ENCODE measurements at regions of chr17 and their contacts with region 1.

Region 1: DNA sequence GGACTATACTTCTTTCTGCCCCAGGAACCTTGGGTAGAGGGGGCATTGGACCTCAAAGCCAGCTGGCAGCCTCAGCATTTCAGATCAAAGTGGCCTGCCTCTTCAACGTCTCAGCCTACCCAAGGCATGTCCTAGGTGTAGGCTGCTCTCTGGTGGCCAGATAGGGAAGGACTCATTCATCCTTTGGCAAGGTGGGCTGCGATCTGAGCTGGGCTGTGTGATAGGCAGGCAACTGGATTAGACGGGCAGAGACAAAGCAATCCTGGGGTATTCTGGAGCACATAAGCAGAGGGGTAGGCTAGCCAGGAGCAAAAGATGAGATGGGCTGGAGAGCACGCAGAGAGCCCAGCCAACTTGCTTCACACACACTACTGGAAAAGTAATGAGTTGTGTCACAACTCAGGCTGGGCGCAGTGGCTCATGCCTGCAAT is 8.8 kb upstream of the NAGLU start:
- DNase-seq: peak; percentile 86

Region 2: GRCh38 chr17:42312285-42313130 is 214.8 kb before region 1 on chr17:
- in situ Hi-C with region 1: loop called (anchors 10 kb)
- DNase-seq: peak; percentile 73